Heart right ventricle (tissue), 16 donors: ENCODE measurements at regions of chr19 and their contacts with region 1.

Region 1: GRCh38 chr19:44954824-44955586 is at the start of gene CLPTM1:
- DNase-seq: peak; percentile 97 to 98
- ATAC-seq: peak; percentile 95 to 98 (median 97)
- H3K4me3 ChIP-seq: peak within 1 kb of the TSS; percentile 85 to 100 (median 96)
- H3K27ac ChIP-seq: peak within 1 kb of the TSS; percentile 84 to 97 (median 91)
- H3K4me1 ChIP-seq: peaks cover 21 to 74% (median 45%) of the 10 kb centered on the region in 9 donors
- H3K27me3 ChIP-seq: no peaks in the 10 kb centered on the region
- CTCF ChIP-seq: peak in 1 of 9 donors; percentile 13
- total RNA-seq, gene CLPTM1: 81.1 to 130 (median 95.7) TPM

Region 2: GRCh38 chr19:44777715-44778347 is 177.2 kb before region 1 on chr19 and contains the start of gene CBLC:
- intact Hi-C with region 1: no loop called
- DNase-seq: no peak
- ATAC-seq: peak in 2 of 8 donors; percentile 29 to 33
- H3K4me3 ChIP-seq: no peak within 1 kb of the TSS
- H3K27ac ChIP-seq: no peak within 1 kb of the TSS
- H3K4me1 ChIP-seq: peaks cover 0 to 4% (median 0%) of the 10 kb centered on the region in 9 donors
- H3K27me3 ChIP-seq: peaks cover 0 to 14% (median 10%) of the 10 kb centered on the region in 7 donors
- CTCF ChIP-seq: no peak
- total RNA-seq, gene CBLC: 0.38 TPM in 1 of 10 donors, not detected in the others

Region 3: DNA sequence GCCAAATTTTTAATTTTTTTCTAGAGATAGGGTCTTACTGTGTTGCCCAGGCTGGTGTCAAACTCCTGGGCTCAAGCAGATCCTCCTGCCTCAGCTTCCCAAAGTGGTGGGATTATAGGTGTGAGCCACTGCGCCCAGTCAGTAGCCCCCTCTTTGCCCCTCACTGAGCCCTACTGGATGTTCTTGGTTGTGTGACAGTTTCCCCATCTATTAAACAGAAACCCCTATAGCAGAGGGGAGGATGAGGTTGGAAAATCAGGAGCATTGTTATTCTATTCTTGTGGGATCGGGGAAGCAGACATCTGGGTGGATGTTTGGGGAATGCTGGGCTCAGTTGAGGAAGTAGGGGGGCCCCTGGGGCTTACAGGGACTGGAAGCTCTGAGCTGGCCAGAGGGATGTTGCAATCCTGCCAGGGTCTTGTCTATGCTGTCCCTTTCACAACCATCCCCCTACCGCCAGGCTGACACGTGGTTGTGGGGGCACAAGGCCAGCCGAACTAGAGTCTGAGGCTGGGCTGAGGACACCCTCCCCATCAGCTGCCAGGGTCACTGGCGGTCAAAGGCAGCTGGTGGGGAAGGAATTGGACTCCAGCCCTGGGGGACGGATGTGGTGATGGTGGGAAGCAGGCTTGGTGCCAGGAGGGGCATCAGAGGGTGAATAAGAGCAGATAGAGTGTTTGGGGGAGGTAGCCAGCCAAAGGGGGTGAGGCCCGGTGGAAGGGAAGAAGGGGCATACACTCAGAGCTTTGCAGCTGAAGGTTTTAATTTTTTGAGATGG is 29.7 kb before region 1 on chr19:
- intact Hi-C with region 1: loop called in 1 of 10 experiments (anchors 1 kb)
- DNase-seq: peak; percentile 60 to 82
- ATAC-seq: peak; percentile 58 to 81 (median 74)
- H3K4me3 ChIP-seq: no peak overlapping the region
- H3K27ac ChIP-seq: peak overlapping the region in 3 of 10 donors; percentile 37 to 54 (median 48)
- H3K4me1 ChIP-seq: peaks cover 0 to 46% (median 17%) of the 10 kb centered on the region in 9 donors
- H3K27me3 ChIP-seq: no peaks in the 10 kb centered on the region
- CTCF ChIP-seq: no peak

Region 4: DNA sequence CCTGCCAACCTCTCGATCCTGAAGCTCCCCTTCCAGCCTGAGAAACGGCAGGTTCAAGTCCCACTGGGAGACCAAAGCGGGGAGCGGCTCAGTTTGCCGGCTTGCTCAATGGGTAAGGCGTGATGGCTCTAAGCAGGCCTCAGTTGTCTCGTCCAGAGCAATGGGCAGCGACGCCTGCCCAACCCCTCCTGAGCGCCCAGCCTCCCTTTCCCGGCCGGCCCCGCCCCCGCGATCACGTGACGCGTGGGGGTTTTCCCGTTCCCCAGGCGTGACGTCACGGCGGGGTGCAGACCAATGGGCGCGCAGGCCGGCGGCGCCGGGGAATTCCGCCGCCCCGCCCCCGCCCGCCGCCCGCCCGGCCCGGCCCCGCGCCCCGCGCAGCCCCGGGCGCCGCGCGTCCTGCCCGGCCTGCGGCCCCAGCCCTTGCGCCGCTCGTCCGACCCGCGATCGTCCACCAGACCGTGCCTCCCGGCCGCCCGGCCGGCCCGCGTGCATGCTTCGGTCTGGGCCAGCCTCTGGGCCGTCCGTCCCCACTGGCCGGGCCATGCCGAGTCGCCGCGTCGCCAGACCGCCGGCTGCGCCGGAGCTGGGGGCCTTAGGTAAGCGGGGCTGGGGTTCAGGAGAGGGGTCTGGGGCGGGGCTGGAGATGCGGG is 46.2 kb after region 1 on chr19 and contains the start of gene RELB:
- intact Hi-C with region 1: loop called in 1 of 10 experiments (anchors 2 kb)
- DNase-seq: peak; percentile 96 to 97
- ATAC-seq: peak; percentile 52 to 78 (median 67)
- H3K4me3 ChIP-seq: peak within 1 kb of the TSS; percentile 80 to 94 (median 86)
- H3K27ac ChIP-seq: peak within 1 kb of the TSS; percentile 93 to 100 (median 99)
- H3K4me1 ChIP-seq: peaks cover 5 to 16% (median 12%) of the 10 kb centered on the region in 9 donors
- H3K27me3 ChIP-seq: no peaks in the 10 kb centered on the region
- CTCF ChIP-seq: no peak
- total RNA-seq, gene RELB: 1.3 to 19.3 (median 5.5) TPM